GM12878 (cell line): ENCODE measurements at regions of chr6 and their contacts with region 1.

Region 1: GRCh38 chr6:13328076-13328874 is at the start of gene TBC1D7:
- DNase-seq: peak; percentile 63
- ATAC-seq: peak; percentile 91
- H3K4me3 ChIP-seq: peak within 1 kb of the TSS; percentile 90
- H3K27ac ChIP-seq: peak within 1 kb of the TSS; percentile 87
- H3K4me1 ChIP-seq: peaks cover 5% of the 10 kb centered on the region; the same call in 1 of the 2 replicates
- H3K27me3 ChIP-seq: no peaks in the 10 kb centered on the region
- CTCF ChIP-seq: 0 out of 6 replicates have a peak, but pooled peaks of 1 of the 3 experiments have one; percentile 1
- EP300 ChIP-seq: no peak
- POLR2A ChIP-seq: peak; percentile 92
- RAD21 ChIP-seq: no peak
- polyA plus RNA-seq, gene TBC1D7: 36.5 to 39.3 TPM

Region 2: DNA sequence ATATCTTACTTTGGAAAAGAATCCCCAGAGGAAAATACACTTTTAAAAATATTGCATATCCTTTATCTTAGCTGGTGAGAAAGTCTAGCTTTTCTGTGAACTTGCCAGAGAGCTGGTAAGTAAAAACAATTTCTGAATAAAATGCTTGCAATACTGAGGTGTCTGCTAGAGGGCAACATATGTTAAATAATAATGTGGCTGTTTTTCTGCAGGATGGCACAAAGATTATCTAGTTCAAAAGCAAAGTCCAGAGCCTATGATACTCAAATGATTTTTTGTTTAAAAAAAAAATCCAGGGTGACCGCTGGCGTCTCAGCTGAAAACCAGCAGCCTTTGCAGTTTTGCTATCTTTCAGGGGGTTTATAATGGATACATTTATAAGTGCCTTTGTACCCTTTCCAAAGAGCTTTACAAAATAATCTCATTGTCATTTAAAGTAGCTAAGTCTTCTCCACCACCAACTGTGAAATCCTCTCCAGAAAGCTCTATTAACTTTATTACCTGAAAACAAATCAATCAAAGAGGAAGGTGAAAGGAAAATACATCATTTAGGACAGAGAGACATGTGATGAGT is 416.8 kb before region 1 on chr6:
- CTCF ChIA-PET with region 1: interaction called, 52 read pairs
- POLR2A ChIA-PET with region 1: no interaction called
- RAD21 ChIA-PET with region 1: interaction called, 41 read pairs
- SMC1A ChIA-PET with region 1: interaction called, 11 read pairs
- in situ Hi-C with region 1: loop called (anchors 5 kb)
- intact Hi-C with region 1: loop called (anchors 1 kb)
- DNase-seq: no peak
- ATAC-seq: no peak
- H3K4me3 ChIP-seq: no peak overlapping the region
- H3K27ac ChIP-seq: no peak overlapping the region
- H3K4me1 ChIP-seq: no peaks in the 10 kb centered on the region
- H3K27me3 ChIP-seq: no peaks in the 10 kb centered on the region
- CTCF ChIP-seq: peak; percentile 31 to 51 (median 48); a peak in 5 of 6 replicates
- EP300 ChIP-seq: no peak
- POLR2A ChIP-seq: no peak
- RAD21 ChIP-seq: peak; percentile 77

Region 3: DNA sequence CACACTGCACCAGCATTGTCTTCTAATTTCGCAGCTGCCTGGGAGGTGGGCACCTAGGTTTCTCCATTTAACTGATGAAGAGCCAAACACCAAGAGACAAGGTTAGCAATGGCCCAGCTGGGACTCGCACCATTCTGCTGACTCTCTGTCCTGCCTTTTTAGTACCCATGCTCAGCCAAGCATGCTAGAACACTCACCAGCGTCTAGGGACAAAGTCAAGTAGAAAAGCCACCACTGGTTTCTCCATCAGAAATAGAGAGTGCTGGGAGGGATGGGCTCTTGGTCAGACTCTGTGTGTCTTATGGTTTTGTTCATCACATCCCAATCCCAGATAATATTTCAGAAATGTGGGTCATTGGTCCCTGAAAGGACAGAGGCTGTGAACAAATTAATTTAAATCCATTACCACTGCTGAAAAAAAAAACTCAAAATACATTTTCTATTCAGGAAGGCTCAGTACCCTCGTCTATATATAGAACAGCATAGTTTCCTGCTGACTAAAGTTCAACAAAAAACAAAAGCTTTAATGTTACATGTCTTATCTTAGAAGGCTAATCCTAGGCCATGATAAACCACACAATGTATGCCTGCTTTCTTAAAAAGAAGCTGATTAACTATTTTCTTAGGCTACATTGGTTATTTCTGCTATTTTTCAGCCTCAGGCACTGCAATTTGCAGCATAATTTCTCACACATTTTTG is 110.9 kb before region 1 on chr6:
- CTCF ChIA-PET with region 1: interaction called, 8 read pairs
- POLR2A ChIA-PET with region 1: no interaction called
- RAD21 ChIA-PET with region 1: interaction called, 9 read pairs
- SMC1A ChIA-PET with region 1: interaction called, 21 read pairs
- in situ Hi-C with region 1: no loop called
- intact Hi-C with region 1: no loop called
- DNase-seq: no peak
- ATAC-seq: peak; percentile 84
- H3K4me3 ChIP-seq: no peak overlapping the region
- H3K27ac ChIP-seq: no peak overlapping the region
- H3K4me1 ChIP-seq: 0 out of 2 replicates have a peak, but pooled peaks cover 4% of the 10 kb centered on the region
- H3K27me3 ChIP-seq: no peaks in the 10 kb centered on the region; a peak in 1 of 4 replicates
- CTCF ChIP-seq: no peak
- EP300 ChIP-seq: no peak
- POLR2A ChIP-seq: no peak
- RAD21 ChIP-seq: no peak

Region 4: DNA sequence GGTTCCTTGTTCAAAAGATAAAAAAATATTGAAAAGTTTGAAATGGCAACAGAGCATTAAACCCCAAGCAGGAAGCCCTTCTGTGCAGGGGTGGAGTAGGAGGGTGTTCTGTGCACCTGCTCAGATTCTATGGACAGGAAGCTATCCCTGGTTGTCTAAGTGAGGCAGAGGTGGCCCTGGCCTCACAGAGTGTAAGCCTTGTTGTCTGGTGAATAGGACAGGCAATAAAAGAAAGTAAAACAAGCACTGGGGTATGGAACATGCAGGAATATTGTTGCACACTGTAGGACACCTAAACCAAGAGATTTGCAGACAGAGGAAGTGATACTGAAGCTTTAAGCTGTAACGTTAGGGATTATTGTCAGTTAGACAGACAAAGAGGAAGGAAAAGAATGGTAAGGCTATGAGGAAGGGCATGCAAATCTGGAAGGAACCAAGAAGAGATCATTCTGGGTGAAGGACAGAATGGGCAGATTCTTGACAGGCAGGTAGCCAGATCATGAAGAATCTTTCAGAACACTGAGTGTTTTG is 66.7 kb before region 1 on chr6:
- CTCF ChIA-PET with region 1: interaction called, 10 read pairs
- POLR2A ChIA-PET with region 1: interaction called, 4 read pairs
- RAD21 ChIA-PET with region 1: interaction called, 8 read pairs
- SMC1A ChIA-PET with region 1: interaction called, 20 read pairs
- in situ Hi-C with region 1: no loop called
- intact Hi-C with region 1: no loop called
- DNase-seq: peak; percentile 80
- ATAC-seq: peak; percentile 57
- H3K4me3 ChIP-seq: peak overlapping the region; percentile 52; the same call in 1 of the 2 replicates
- H3K27ac ChIP-seq: peak overlapping the region; percentile 50
- H3K4me1 ChIP-seq: peaks cover 59% of the 10 kb centered on the region
- H3K27me3 ChIP-seq: no peaks in the 10 kb centered on the region
- CTCF ChIP-seq: no peak
- EP300 ChIP-seq: peak in 1 of 2 experiments; percentile 63; a peak in 1 of 4 replicates
- POLR2A ChIP-seq: peak; percentile 7; the same call in 1 of the 2 replicates
- RAD21 ChIP-seq: no peak; the same call in 1 of the 2 replicates

Region 5: DNA sequence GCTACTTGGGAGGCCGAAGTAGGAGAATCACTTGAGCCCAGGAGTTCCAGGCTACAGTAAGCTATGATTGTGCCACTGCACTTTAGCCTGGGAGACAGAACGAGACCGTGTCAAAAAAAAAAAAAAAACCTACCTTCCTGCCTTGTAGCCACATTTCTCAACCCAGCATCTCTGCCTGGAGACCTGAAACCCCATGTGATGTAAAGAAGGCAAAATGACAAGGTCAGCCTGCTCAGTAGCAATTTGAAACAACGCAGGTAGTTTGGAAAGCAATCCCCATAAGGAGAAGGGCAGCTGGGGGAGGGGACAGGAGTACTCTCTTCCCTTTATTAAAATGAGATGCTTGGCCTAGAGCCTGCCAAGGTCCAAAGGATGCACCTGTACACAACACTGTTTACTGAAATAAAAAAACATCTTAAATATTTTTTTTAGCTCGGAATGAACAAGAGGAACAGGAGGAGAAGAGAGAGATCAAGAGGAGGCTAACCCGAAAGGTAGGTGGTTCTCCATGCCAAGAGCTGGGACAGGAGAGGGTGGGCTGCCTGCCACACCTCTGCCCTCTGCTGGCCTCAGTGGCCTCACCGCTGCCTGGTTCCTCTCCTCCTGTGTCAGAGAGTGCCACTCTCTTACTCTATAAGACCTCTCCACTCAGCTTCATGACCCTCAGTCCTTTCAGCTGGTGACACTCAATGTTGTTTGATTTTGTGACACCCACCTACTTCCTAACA is 50.3 kb before region 1 on chr6:
- CTCF ChIA-PET with region 1: interaction called, 31 read pairs
- POLR2A ChIA-PET with region 1: interaction called, 22 read pairs
- RAD21 ChIA-PET with region 1: interaction called, 50 read pairs
- SMC1A ChIA-PET with region 1: interaction called, 96 read pairs
- in situ Hi-C with region 1: no loop called
- intact Hi-C with region 1: loop called (anchors 2 kb)
- DNase-seq: no peak
- ATAC-seq: peak; percentile 53
- H3K4me3 ChIP-seq: no peak overlapping the region
- H3K27ac ChIP-seq: no peak overlapping the region
- H3K4me1 ChIP-seq: peaks cover 33% of the 10 kb centered on the region
- H3K27me3 ChIP-seq: no peaks in the 10 kb centered on the region; a peak in 1 of 4 replicates
- CTCF ChIP-seq: peak; percentile 57 to 69 (median 58)
- EP300 ChIP-seq: no peak
- POLR2A ChIP-seq: no peak
- RAD21 ChIP-seq: peak; percentile 58

Region 6: GRCh38 chr6:13315896-13316295 is 12.4 kb before region 1 on chr6:
- CTCF ChIA-PET with region 1: interaction called, 14 read pairs
- POLR2A ChIA-PET with region 1: interaction called, 4 read pairs
- RAD21 ChIA-PET with region 1: interaction called, 4 read pairs
- SMC1A ChIA-PET with region 1: interaction called, 7 read pairs
- in situ Hi-C with region 1: no loop called
- intact Hi-C with region 1: no loop called
- DNase-seq: no peak
- ATAC-seq: no peak
- H3K4me3 ChIP-seq: no peak overlapping the region
- H3K27ac ChIP-seq: no peak overlapping the region
- H3K4me1 ChIP-seq: no peaks in the 10 kb centered on the region
- H3K27me3 ChIP-seq: no peaks in the 10 kb centered on the region
- CTCF ChIP-seq: no peak
- EP300 ChIP-seq: no peak
- POLR2A ChIP-seq: no peak
- RAD21 ChIP-seq: no peak

Region 7: DNA sequence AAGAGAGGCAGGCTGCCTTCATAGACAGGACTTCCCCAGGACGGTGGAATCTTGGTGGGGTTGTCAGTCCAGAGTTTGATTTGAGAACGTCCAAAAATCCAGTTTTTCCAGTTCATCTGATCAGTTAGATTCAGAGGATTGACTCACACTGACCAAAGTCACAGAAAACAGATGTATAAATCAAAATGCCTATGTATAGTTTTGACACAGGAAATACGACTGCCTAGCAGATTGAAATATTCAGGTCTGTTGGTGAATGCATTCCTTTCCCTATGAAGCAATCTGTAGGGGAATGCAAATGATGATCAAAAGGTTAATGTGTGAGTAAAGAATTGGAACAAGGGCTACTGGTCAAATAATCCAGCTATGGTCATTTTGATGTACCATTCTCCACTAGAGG is 188.8 kb after region 1 on chr6:
- CTCF ChIA-PET with region 1: no interaction called
- POLR2A ChIA-PET with region 1: no interaction called
- RAD21 ChIA-PET with region 1: no interaction called
- SMC1A ChIA-PET with region 1: no interaction called
- in situ Hi-C with region 1: no loop called
- intact Hi-C with region 1: no loop called
- DNase-seq: no peak
- ATAC-seq: no peak
- H3K4me3 ChIP-seq: no peak overlapping the region
- H3K27ac ChIP-seq: no peak overlapping the region
- H3K4me1 ChIP-seq: no peaks in the 10 kb centered on the region
- H3K27me3 ChIP-seq: no peaks in the 10 kb centered on the region
- CTCF ChIP-seq: no peak
- EP300 ChIP-seq: no peak
- POLR2A ChIP-seq: no peak
- RAD21 ChIP-seq: no peak